Prostate gland (tissue), 2 donors: ENCODE measurements at regions of chr10 and their contacts with region 1.

Region 1: DNA sequence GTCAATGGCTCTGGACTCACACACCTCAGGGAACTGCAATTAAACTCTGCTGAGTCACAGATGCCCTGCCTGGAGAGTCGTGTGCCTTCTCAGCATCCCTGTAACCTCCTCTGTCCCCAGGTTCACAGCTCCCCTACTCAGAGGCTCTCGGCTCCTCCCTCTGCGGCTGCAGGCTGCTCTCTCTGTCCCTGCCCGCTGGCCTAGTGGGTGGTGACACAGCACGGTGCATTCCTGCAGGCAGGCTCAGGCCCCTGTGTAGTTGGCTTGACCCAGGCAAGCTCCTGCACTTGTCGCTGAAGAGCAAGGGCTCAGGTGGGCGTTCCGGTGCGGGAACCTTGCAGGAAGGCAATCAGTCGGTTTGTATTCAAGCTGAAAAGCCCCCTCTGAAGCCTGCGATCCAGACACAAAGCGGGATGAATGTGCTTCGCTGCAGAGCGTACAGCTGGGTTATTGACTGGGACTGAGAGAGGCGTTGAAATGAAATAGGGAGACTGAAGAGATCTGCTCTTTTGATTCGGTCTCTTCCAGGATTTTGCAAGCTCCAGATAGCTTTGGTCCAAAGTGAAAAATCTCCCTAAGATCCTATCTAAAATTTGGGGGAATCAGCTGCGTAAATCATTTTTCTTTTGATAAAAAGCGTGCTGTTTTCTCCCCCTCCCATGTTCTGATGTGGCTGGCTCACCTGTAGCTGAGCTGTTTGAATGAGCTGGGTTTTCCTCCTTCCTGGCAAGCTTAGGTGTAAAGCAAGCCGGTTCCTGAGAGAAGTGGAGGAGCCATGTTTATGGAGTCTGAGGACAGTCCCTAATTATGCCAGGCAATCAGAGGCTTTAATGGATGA is 208.7 kb upstream of the PHYHIPL start:
- DNase-seq: peak; percentile 24
- H3K4me3 ChIP-seq: no peak overlapping the region
- H3K27ac ChIP-seq: no peak overlapping the region
- H3K4me1 ChIP-seq: no peaks in the 10 kb centered on the region
- H3K27me3 ChIP-seq: no peaks in the 10 kb centered on the region
- CTCF ChIP-seq: no peak
- POLR2A ChIP-seq: no peak

Region 2: GRCh38 chr10:58414270-58415041 is 553.3 kb before region 1 on chr10:
- intact Hi-C with region 1: loop called (anchors 10 kb)
- DNase-seq: no peak
- H3K4me3 ChIP-seq: no peak overlapping the region
- H3K27ac ChIP-seq: no peak overlapping the region
- H3K4me1 ChIP-seq: no peaks in the 10 kb centered on the region
- H3K27me3 ChIP-seq: no peaks in the 10 kb centered on the region
- CTCF ChIP-seq: peak in 3 of 4 experiments; percentile 14 to 33 (median 28)
- POLR2A ChIP-seq: no peak

Region 3: GRCh38 chr10:59019603-59020002 is 51.8 kb after region 1 on chr10:
- intact Hi-C with region 1: no loop called
- DNase-seq: no peak
- H3K4me3 ChIP-seq: no peak overlapping the region
- H3K27ac ChIP-seq: no peak overlapping the region
- H3K4me1 ChIP-seq: no peaks in the 10 kb centered on the region
- H3K27me3 ChIP-seq: no peaks in the 10 kb centered on the region
- CTCF ChIP-seq: no peak
- POLR2A ChIP-seq: no peak